ENCODE measurements at regions of chr2 and their contacts with region 1.

Region 1: DNA sequence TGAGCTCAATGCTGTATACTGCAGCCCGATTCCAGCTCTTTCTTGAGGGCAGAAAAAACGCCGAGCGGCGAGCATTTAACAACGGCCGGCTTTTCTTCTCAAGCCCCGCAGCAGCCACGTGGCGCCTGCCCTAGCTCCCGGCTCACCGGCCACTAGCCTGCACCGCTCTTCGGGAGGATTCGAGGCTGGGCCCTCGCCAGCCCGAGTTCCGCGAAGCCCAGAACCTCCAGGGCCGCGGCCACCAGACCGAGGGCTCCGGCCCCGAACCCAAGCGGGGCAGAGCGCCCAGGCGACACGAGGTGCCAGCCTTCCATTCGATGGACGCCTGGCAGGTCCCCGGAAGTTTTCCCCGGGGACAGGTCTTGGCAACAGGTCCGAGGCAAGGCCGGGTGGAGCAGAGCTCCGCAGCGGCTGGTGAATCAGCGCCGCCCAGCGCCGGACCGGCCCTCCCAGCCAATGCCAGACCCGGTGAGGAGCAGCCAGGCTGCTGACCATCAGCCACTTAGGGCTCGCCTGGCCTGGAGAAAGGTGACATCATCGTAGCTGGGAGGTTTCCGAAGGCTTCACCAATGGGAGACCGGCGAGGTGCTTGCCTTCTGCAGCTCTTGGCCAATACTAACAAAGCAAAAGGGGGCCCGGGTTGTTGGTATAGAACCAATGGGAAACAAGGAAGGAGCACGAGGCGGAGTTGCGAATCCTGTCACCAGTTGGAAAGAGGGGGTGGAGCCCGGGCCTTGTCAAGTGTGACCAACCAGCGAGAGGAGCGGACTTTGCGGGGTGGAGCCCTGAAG is 544 bp upstream of the MXD1 start:
- DNase-seq: peak; percentile 100
- H3K4me3 ChIP-seq: peak overlapping the region; percentile 86 to 91 (median 87)
- H3K27ac ChIP-seq: peak overlapping the region; percentile 97
- H3K4me1 ChIP-seq: no peaks in the 10 kb centered on the region
- H3K27me3 ChIP-seq: no peaks in the 10 kb centered on the region
- CTCF ChIP-seq: peak in 2 of 3 donors; percentile 14 to 16
- POLR2A ChIP-seq: peak; percentile 85

Region 2: GRCh38 chr2:70531419-70532086 is 617.2 kb after region 1 on chr2:
- intact Hi-C with region 1: loop called (anchors 5 kb)
- DNase-seq: no peak
- H3K4me3 ChIP-seq: no peak overlapping the region
- H3K27ac ChIP-seq: no peak overlapping the region
- H3K4me1 ChIP-seq: no peaks in the 10 kb centered on the region
- H3K27me3 ChIP-seq: no peaks in the 10 kb centered on the region
- CTCF ChIP-seq: no peak
- POLR2A ChIP-seq: no peak

Measured in breast epithelium (tissue), 4 donors.